HepG2 (cell line): ENCODE measurements at regions of chr18 and their contacts with region 1.

Region 1: GRCh38 chr18:70337139-70337972 is 48.5 kb downstream of the SOCS6 start:
- DNase-seq: peak; percentile 81
- ATAC-seq: peak; percentile 41
- H3K4me3 ChIP-seq: peak overlapping the region in 2 of 3 experiments; percentile 20 to 59; a peak in 3 of 6 replicates
- H3K27ac ChIP-seq: peak overlapping the region; percentile 97
- H3K4me1 ChIP-seq: peaks cover 76% of the 10 kb centered on the region
- H3K27me3 ChIP-seq: no peaks in the 10 kb centered on the region
- CTCF ChIP-seq: no peak
- EP300 ChIP-seq: peak in 1 of 2 experiments; percentile 52; a peak in 1 of 4 replicates
- POLR2A ChIP-seq: peak in 1 of 2 experiments; percentile 27; a peak in 1 of 4 replicates
- RAD21 ChIP-seq: no peak

Region 2: GRCh38 chr18:70172225-70172624 is 165.1 kb before region 1 on chr18:
- CTCF ChIA-PET with region 1: no interaction called
- POLR2A ChIA-PET with region 1: no interaction called
- in situ Hi-C with region 1: no loop called
- intact Hi-C with region 1: no loop called
- DNase-seq: no peak
- ATAC-seq: no peak
- H3K4me3 ChIP-seq: no peak overlapping the region
- H3K27ac ChIP-seq: no peak overlapping the region
- H3K4me1 ChIP-seq: no peaks in the 10 kb centered on the region; the same call in 1 of the 2 replicates
- H3K27me3 ChIP-seq: no peaks in the 10 kb centered on the region
- CTCF ChIP-seq: 0 out of 2 replicates have a peak, but pooled peaks have one; percentile 13
- EP300 ChIP-seq: no peak
- POLR2A ChIP-seq: no peak
- RAD21 ChIP-seq: no peak

Region 3: DNA sequence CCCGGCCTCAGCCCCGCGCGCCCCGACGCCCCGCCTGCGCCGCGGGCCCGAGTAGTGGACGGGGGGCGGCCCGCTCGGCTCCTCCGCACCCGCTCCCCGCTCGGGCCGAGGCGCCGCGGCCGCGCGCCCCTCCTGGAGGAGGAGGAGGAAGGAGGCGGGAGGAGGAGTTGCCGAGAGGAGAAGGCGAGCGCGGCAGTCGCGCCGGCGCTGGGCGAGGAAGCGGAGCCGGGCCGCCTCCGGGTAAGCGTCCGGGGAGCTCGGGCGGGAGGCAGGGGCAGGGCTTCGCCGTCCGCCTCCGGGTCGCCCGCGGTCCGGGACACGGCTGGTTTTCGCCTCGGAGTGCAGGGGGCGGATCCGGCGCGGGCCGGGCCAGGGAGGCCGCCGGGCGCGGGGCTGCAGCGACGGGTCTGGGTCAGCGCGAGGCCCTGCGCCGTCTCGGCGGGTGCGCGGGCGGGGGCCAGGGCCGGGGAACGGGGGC is 48.5 kb before region 1 on chr18 and contains the start of gene SOCS6:
- CTCF ChIA-PET with region 1: no interaction called
- POLR2A ChIA-PET with region 1: interaction called, 5 read pairs
- in situ Hi-C with region 1: no loop called
- intact Hi-C with region 1: loop called (anchors 5 kb)
- DNase-seq: no peak
- ATAC-seq: peak; percentile 65
- H3K4me3 ChIP-seq: peak within 1 kb of the TSS; percentile 91 to 95 (median 95)
- H3K27ac ChIP-seq: peak within 1 kb of the TSS; percentile 91
- H3K4me1 ChIP-seq: peaks cover 42% of the 10 kb centered on the region
- H3K27me3 ChIP-seq: no peaks in the 10 kb centered on the region; a peak in 1 of 5 replicates
- CTCF ChIP-seq: no peak
- EP300 ChIP-seq: no peak
- POLR2A ChIP-seq: peak in 1 of 2 experiments; percentile 50
- RAD21 ChIP-seq: peak; percentile 10; the same call in 1 of the 2 replicates
- total RNA-seq, gene SOCS6: 38.3 and 49.0 TPM in 2 replicates